ENCODE measurements at regions of chr18 and their contacts with region 1.

Region 1: GRCh38 chr18:22563098-22563707 is 145.5 kb upstream of the CTAGE1 start:
- DNase-seq: no peak
- ATAC-seq: peak; percentile 83
- H3K4me3 ChIP-seq: peak overlapping the region in 1 of 2 donors; percentile 21
- H3K27ac ChIP-seq: peak overlapping the region in 1 of 2 donors; percentile 25
- H3K4me1 ChIP-seq: peaks cover 0 to 5% of the 10 kb centered on the region in 2 donors
- H3K27me3 ChIP-seq: no peaks in the 10 kb centered on the region

Region 2: DNA sequence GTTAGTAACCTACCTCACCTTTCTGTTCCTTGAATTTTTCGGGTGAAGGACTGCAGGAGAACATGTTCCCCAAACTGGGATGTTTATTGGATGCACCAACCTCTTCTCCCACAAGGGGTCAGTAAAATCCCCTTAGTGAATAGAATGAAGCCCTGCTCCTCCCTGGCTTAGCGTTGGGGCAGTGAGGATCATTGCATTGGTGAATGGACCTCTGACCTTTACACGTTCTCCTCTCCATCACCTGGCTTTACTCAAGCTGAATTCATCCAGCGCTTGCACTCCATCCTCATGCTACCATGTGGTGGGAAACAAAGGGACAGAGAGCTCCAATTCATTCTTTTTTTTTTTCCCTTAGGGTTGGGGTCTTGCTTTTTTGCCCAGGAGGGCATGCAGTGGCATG is 665.4 kb before region 1 on chr18:
- intact Hi-C with region 1: loop called in 1 of 2 experiments (anchors 10 kb)
- DNase-seq: peak in 1 of 2 donors; percentile 49
- ATAC-seq: peak; percentile 68
- H3K4me3 ChIP-seq: no peak overlapping the region
- H3K27ac ChIP-seq: no peak overlapping the region
- H3K4me1 ChIP-seq: no peaks in the 10 kb centered on the region
- H3K27me3 ChIP-seq: no peaks in the 10 kb centered on the region

Region 3: DNA sequence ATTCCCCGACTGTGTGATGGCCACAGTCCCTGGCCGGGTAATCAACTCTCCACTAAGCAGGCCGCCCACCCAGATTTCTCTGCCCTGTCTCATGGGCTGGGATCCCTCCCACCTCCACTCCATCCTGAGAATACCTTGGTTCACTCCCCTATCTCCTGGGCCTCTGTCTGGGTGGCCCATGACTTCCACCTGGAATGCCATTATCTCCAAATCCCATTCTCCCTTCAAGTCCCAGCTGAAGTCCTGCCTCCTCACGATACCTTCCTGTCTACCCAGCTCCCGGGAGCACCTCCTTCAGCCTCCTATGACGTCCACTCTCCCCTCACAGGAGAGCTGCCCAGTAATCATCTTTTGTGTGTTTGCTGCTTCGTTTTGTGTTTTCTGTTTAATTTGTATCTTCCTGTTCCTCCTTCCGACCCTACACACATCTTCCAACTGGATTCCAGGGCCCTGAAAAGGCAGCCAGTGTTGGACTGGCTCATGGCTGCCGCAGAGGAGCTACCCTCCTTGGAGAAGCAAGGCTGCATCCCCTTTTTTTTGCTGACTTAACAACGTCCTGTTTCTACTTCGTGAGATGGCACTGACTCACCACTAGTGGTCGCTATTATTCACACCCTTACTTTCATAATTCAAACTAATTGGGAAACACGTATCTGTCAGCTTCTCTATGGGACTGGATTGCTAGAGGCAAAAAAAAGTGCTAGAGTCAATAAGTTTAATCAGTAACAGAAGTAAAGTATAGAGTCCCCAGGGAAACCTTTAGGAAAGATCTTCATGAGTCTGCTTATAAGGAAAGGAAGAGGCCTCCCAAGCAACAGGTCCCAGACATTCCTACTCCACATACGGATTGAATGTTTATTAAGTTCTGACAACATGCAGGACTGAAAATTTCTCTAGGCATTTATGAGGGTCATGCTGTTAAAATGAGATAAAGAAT is 565.7 kb before region 1 on chr18:
- intact Hi-C with region 1: loop called (anchors 5 kb)
- DNase-seq: no peak
- ATAC-seq: peak; percentile 47
- H3K4me3 ChIP-seq: no peak overlapping the region
- H3K27ac ChIP-seq: no peak overlapping the region
- H3K4me1 ChIP-seq: no peaks in the 10 kb centered on the region
- H3K27me3 ChIP-seq: no peaks in the 10 kb centered on the region

Region 4: DNA sequence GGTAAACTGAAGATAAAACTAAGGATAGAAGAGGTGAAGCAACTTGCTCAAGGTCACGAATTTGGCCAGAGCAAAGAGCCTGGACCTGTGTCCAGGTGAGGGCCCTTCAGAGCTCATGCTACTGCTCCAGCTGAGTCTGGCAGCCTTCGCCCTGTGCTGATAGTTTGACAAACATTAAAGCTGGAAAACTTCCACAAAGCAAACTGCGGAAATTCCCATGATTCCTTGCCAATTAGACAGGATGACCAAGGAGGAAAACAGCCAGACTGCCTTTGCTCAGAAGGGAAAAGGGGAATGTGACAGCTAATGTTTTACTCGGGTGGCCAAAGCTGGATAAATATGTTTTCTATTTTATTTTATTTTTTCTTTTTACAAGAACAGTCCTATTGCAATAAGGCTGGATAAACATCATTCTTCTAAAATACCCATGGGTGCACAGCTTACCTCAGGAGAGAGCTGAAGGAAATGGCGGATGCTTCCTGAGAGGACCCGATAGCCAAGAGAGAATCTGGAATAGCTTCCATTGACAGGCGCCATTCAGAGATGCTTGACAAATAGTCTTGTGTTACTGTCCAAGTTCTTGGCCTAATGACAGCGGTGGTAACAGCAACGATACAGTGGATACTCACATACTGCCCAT is 140.2 kb before region 1 on chr18:
- intact Hi-C with region 1: loop called in 1 of 2 experiments (anchors 5 kb)
- DNase-seq: peak in 1 of 2 donors; percentile 64
- ATAC-seq: peak; percentile 17
- H3K4me3 ChIP-seq: no peak overlapping the region
- H3K27ac ChIP-seq: peak overlapping the region in 1 of 2 donors; percentile 89
- H3K4me1 ChIP-seq: peaks cover 0 to 7% of the 10 kb centered on the region in 2 donors
- H3K27me3 ChIP-seq: no peaks in the 10 kb centered on the region

Measured in aorta (tissue), 5 donors.